ENCODE measurements at regions of chr1 and their contacts with region 1.

Region 1: DNA sequence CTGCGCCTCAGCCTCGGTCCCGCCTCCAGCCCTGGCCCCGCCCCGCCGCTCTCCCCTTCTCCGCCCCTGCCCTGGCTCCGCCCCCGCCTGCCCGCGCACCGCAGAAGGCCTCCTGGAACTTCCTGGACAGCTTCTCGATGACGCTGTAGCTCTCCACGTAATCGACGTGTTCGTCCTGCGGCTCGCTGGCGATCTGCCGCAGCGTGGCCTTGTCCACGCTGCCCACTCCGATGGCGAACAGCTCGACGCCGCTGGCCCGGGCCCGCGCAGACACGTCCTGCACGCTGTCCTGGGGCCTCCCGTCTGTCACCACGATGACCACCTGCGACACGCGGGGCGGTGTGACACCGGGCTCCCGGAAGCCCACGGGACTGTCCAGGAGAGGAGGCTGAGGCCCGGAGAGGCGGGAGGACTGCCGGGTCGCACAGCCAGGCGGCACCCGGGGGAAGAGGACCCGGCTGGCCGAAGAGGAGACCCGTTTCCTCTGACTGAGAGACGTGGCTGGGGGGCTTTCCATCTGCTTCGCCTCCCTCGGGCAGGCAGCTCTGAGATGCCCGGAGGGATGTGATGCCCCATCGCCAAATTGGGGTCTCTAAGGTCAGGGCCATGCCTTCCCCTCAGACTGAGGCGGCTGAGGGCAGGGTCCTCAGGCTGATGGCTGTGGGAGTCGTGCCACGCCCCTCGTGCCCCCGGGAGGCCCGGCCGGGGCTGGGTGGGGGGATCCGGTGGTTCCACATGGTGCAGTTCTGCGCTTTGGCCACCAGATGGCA is 4.6 kb downstream of the MATN1 start:
- DNase-seq: peak; percentile 83
- H3K4me3 Mint-ChIP-seq: peak overlapping the region; percentile 81
- H3K27ac Mint-ChIP-seq: peak overlapping the region; percentile 98
- H3K4me1 Mint-ChIP-seq: peaks cover 22% of the 10 kb centered on the region
- H3K27me3 Mint-ChIP-seq: no peaks in the 10 kb centered on the region

Region 2: GRCh38 chr1:30743584-30744059 is 24.8 kb after region 1 on chr1:
- CTCF ChIA-PET with region 1: interaction called, 63 read pairs
- POLR2A ChIA-PET with region 1: interaction called, 8 read pairs
- DNase-seq: peak; percentile 88
- H3K4me3 Mint-ChIP-seq: peak overlapping the region; percentile 68
- H3K27ac Mint-ChIP-seq: peak overlapping the region; percentile 92
- H3K4me1 Mint-ChIP-seq: peaks cover 95% of the 10 kb centered on the region
- H3K27me3 Mint-ChIP-seq: no peaks in the 10 kb centered on the region

Region 3: GRCh38 chr1:30764939-30765555 is 46.2 kb after region 1 on chr1:
- CTCF ChIA-PET with region 1: interaction called, 24 read pairs
- POLR2A ChIA-PET with region 1: no interaction called
- DNase-seq: no peak
- H3K4me3 Mint-ChIP-seq: no peak overlapping the region
- H3K27ac Mint-ChIP-seq: peak overlapping the region; percentile 60
- H3K4me1 Mint-ChIP-seq: peaks cover 55% of the 10 kb centered on the region
- H3K27me3 Mint-ChIP-seq: no peaks in the 10 kb centered on the region

Region 4: GRCh38 chr1:30790850-30791778 is 72.3 kb after region 1 on chr1:
- CTCF ChIA-PET with region 1: interaction called, 75 read pairs
- POLR2A ChIA-PET with region 1: no interaction called
- DNase-seq: peak; percentile 16
- H3K4me3 Mint-ChIP-seq: no peak overlapping the region
- H3K27ac Mint-ChIP-seq: no peak overlapping the region
- H3K4me1 Mint-ChIP-seq: peaks cover 10% of the 10 kb centered on the region
- H3K27me3 Mint-ChIP-seq: peaks cover 8% of the 10 kb centered on the region